ENCODE measurements at regions of chr6 and their contacts with region 1.

Region 1: GRCh38 chr6:4135665-4136353 is 434 bp upstream of the ECI2 start:
- DNase-seq: peak; percentile 76 to 82 (median 78)
- H3K4me3 ChIP-seq: peak overlapping the region; percentile 46 to 85 (median 85)
- H3K4me3 Mint-ChIP-seq: peak overlapping the region; percentile 81 to 91
- H3K27ac ChIP-seq: peak overlapping the region; percentile 4 to 60
- H3K27ac Mint-ChIP-seq: peak overlapping the region in 6 of 7 donors; percentile 38 to 86 (median 76)
- H3K4me1 ChIP-seq: peaks cover 13 to 21% of the 10 kb centered on the region in 2 donors
- H3K4me1 Mint-ChIP-seq: peaks cover 17% of the 10 kb centered on the region
- H3K27me3 ChIP-seq: no peaks in the 10 kb centered on the region
- H3K27me3 Mint-ChIP-seq: peaks cover 2 to 6% (median 5%) of the 10 kb centered on the region in 3 donors
- CTCF ChIP-seq: no peak

Region 2: GRCh38 chr6:3277851-3278416 is 857.9 kb before region 1 on chr6:
- intact Hi-C with region 1: loop called in 1 of 2 experiments (anchors 10 kb)
- DNase-seq: no peak
- H3K4me3 ChIP-seq: no peak overlapping the region
- H3K4me3 Mint-ChIP-seq: no peak overlapping the region
- H3K27ac ChIP-seq: no peak overlapping the region
- H3K27ac Mint-ChIP-seq: no peak overlapping the region
- H3K4me1 ChIP-seq: no peaks in the 10 kb centered on the region
- H3K4me1 Mint-ChIP-seq: peaks cover 1% of the 10 kb centered on the region
- H3K27me3 ChIP-seq: no peaks in the 10 kb centered on the region
- H3K27me3 Mint-ChIP-seq: peaks cover 0 to 3% (median 0%) of the 10 kb centered on the region in 3 donors
- CTCF ChIP-seq: no peak

Region 3: DNA sequence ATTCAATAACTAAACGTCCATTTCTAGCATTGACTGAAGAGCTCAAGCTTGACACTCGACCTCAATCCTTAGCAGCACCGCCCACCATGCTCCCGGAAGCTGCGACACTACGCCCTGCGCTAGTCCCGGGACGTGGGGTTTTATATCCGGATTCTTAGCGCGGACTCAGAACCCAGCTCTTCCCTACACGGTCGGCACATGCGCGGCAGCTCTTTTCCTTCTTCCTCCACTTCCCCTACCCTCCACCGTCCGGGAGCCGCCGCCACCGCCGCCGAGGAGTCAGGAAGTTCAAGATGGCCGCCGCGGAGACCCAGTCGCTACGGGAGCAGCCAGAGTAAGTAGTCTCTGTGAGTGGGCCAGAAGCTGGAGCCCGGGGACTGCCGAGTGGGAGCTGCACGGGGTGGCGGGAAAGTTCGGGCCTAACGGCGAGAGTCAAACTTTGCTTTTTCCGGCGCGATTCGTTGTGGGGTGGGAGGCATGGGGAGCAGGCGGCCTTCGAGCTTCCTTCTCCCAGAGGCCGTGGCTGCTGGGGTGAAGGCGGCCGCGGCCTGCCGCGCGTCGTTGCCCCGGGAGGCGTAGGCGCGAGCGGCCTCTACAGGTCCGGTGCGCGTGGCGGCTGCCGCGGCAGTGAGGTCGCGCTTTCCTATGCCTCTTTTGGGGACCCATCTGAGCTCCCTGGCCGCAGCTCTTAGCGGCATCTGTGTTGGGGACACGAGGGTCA is 114.5 kb before region 1 on chr6:
- intact Hi-C with region 1: loop called (anchors 5 kb)
- DNase-seq: peak; percentile 91 to 97 (median 95)
- H3K4me3 ChIP-seq: peak overlapping the region; percentile 81 to 92 (median 85)
- H3K4me3 Mint-ChIP-seq: peak overlapping the region; percentile 97 to 98
- H3K27ac ChIP-seq: peak overlapping the region; percentile 90 to 99
- H3K27ac Mint-ChIP-seq: peak overlapping the region; percentile 97 to 99 (median 99)
- H3K4me1 ChIP-seq: peaks cover 58 to 59% of the 10 kb centered on the region in 2 donors
- H3K4me1 Mint-ChIP-seq: peaks cover 60% of the 10 kb centered on the region
- H3K27me3 ChIP-seq: no peaks in the 10 kb centered on the region
- H3K27me3 Mint-ChIP-seq: no peaks in the 10 kb centered on the region
- CTCF ChIP-seq: peak; percentile 53

Region 4: DNA sequence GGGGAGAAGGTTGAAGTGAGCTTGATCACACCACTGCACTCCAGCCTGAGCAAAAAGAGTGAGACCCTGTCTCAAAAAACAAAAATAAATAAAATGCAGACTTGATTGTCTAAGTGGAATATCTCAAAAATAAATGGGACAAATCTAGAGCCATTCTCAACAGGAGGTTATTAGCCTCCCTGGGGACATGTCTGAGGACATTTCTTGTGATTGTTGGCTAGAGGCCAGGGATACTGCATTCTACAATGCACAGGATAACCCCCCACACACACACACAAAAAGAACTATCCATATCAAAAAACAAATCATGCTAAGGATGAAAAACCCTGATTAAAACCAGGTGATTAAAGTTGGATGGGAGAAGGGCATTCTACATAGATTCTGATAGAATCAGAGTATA is 94.3 kb before region 1 on chr6:
- intact Hi-C with region 1: loop called in 1 of 2 experiments (anchors 10 kb)
- DNase-seq: no peak
- H3K4me3 ChIP-seq: no peak overlapping the region
- H3K4me3 Mint-ChIP-seq: no peak overlapping the region
- H3K27ac ChIP-seq: no peak overlapping the region
- H3K27ac Mint-ChIP-seq: peak overlapping the region in 2 of 7 donors; percentile 18 to 54
- H3K4me1 ChIP-seq: no peaks in the 10 kb centered on the region
- H3K4me1 Mint-ChIP-seq: no peaks in the 10 kb centered on the region
- H3K27me3 ChIP-seq: no peaks in the 10 kb centered on the region
- H3K27me3 Mint-ChIP-seq: no peaks in the 10 kb centered on the region
- CTCF ChIP-seq: no peak

Region 5: GRCh38 chr6:4196359-4196758 is 60.5 kb after region 1 on chr6:
- intact Hi-C with region 1: no loop called
- DNase-seq: no peak
- H3K4me3 ChIP-seq: no peak overlapping the region
- H3K4me3 Mint-ChIP-seq: no peak overlapping the region
- H3K27ac ChIP-seq: no peak overlapping the region
- H3K27ac Mint-ChIP-seq: no peak overlapping the region
- H3K4me1 ChIP-seq: no peaks in the 10 kb centered on the region
- H3K4me1 Mint-ChIP-seq: no peaks in the 10 kb centered on the region
- H3K27me3 ChIP-seq: no peaks in the 10 kb centered on the region
- H3K27me3 Mint-ChIP-seq: peaks cover 2 to 3% (median 3%) of the 10 kb centered on the region in 3 donors
- CTCF ChIP-seq: no peak

Region 6: GRCh38 chr6:4225161-4225872 is 89.5 kb after region 1 on chr6:
- intact Hi-C with region 1: no loop called
- DNase-seq: no peak
- H3K4me3 ChIP-seq: no peak overlapping the region
- H3K4me3 Mint-ChIP-seq: no peak overlapping the region
- H3K27ac ChIP-seq: no peak overlapping the region
- H3K27ac Mint-ChIP-seq: no peak overlapping the region
- H3K4me1 ChIP-seq: no peaks in the 10 kb centered on the region
- H3K4me1 Mint-ChIP-seq: no peaks in the 10 kb centered on the region
- H3K27me3 ChIP-seq: no peaks in the 10 kb centered on the region
- H3K27me3 Mint-ChIP-seq: peaks cover 0 to 1% (median 0%) of the 10 kb centered on the region in 3 donors
- CTCF ChIP-seq: no peak